PC-3 (cell line): ENCODE measurements at regions of chr9 and their contacts with region 1.

Region 1: DNA sequence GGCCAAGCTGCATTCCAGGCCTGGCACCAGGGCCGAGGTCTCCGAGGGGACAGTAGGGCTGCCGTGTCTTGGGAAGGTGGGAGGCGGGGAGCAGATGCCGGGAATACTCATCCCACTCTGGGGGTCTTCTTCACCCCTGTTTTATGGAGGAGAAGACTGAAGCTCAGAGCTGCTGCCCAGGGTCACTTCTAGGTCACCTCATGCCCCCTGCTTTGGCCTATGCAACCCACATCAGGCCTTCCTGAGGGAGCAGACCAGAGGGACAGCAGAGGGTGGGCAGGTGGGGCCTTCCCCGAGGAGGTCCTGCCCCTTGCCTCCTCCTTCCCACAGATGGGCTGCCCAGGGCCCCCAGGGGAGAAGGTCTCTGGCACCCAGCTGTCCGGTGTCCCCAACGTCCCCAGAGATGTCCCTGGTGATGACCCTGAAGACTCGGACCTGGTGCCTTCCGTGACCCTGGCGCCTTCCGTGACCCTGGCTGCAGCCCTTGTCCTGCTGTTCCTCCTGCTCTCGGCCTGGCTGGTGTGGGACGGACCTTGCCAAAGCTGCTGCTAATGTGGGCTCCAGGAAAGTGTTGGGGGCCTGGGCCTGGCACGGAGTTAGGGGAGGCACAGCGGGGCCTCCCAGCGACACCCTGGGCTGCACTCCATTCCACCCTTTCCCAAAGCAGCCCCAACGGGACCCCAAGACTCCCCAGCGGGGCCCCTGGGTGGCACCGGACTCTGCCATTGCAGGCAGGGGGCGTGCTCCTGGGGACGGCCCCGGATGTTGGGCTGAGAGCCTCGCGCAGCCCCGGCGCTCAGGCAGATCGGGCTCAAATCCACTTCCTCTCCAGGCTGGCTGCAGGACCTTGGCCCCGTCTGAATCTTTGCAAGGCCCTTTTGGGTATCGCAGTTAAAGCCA is 6.7 kb upstream of the SLC2A6 start:
- DNase-seq: no peak
- ATAC-seq: peak; percentile 14; the same call in 1 of the 2 replicates
- H3K4me3 ChIP-seq: no peak overlapping the region
- H3K27ac ChIP-seq: no peak overlapping the region
- H3K4me1 ChIP-seq: peaks cover 16% of the 10 kb centered on the region
- H3K27me3 ChIP-seq: no peaks in the 10 kb centered on the region
- CTCF ChIP-seq: no peak

Region 2: DNA sequence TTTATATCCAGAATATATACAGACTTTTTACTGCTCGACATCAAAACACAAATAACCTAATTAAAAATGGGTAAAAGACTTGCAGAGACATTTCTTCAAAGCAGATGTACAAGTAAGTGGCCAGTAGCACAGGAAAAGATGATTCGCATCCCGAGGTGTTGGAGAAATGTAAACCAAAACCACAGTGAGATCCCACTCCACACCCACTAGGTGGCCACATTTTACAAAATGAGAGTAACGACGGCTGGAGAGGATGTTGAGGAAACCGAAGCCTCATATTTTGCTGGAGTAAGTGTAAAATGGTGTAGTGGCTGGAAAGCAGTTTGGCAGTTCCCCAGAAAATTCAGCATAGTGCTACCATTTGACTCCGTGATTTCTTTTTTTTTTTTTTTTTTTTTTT is 300.6 kb before region 1 on chr9:
- CTCF ChIA-PET with region 1: interaction called, 6 read pairs
- POLR2A ChIA-PET with region 1: no interaction called
- intact Hi-C with region 1: loop called (anchors 5 kb)
- DNase-seq: peak; percentile 78
- ATAC-seq: peak; percentile 80
- H3K4me3 ChIP-seq: no peak overlapping the region
- H3K27ac ChIP-seq: no peak overlapping the region
- H3K4me1 ChIP-seq: 0 out of 2 replicates have a peak, but pooled peaks cover 4% of the 10 kb centered on the region
- H3K27me3 ChIP-seq: no peaks in the 10 kb centered on the region
- CTCF ChIP-seq: peak; percentile 61

Region 3: GRCh38 chr9:133356391-133357091 is 129.1 kb before region 1 on chr9 and contains the starts of genes SURF1 and SURF2:
- CTCF ChIA-PET with region 1: interaction called, 5 read pairs
- POLR2A ChIA-PET with region 1: no interaction called
- intact Hi-C with region 1: loop called (anchors 5 kb)
- DNase-seq: peak; percentile 74
- ATAC-seq: peak; percentile 76
- H3K4me3 ChIP-seq: peak within 1 kb of the TSS; percentile 89
- H3K27ac ChIP-seq: no peak within 1 kb of the TSS
- H3K4me1 ChIP-seq: peaks cover 11% of the 10 kb centered on the region
- H3K27me3 ChIP-seq: no peaks in the 10 kb centered on the region
- CTCF ChIP-seq: no peak
- total RNA-seq, gene SURF1: 15.7 and 28.1 TPM in 2 replicates
- total RNA-seq, gene SURF2: 103 and 134 TPM in 2 replicates

Region 4: DNA sequence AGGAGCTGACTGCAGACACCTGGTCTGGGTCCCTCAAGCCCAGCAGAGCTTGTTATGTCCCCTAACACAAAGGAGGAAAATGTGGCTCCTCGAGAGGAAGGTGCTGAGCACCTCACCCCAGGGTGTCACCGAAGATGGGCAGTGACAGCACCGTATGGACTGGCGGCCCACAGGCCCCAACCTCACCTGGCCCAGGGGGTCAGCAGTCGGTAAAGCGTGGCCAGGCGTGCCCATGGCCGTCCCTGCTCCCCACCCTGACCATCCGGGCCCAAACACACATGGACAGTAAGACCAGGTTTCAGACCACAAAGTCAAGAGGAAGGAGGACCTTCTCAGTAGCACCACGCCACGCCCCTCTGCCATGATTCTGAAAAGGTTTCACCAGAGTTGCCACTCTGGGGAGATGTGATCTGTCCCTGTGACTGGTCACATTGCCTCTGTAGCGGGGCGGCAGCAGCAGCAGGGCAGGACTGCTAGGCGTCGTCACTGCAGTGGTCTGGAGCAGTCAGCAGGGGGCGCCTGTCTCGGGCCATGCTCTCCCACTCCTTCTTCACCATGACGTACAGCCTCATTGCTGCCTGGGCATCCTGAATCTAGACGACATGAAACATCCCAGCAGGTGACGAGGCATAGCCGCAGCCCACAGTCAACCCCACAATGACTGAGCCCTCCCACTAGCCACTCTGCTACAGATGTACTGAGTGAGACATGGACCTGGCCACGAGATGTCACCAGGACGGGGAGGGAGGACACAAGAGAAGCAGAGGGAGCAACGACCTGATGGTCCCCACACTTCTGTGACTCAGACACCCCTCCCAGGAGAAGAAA is 78.9 kb before region 1 on chr9:
- CTCF ChIA-PET with region 1: no interaction called
- POLR2A ChIA-PET with region 1: no interaction called
- intact Hi-C with region 1: loop called (anchors 1 kb)
- DNase-seq: peak; percentile 48
- ATAC-seq: peak; percentile 82
- H3K4me3 ChIP-seq: no peak overlapping the region
- H3K27ac ChIP-seq: no peak overlapping the region
- H3K4me1 ChIP-seq: no peaks in the 10 kb centered on the region
- H3K27me3 ChIP-seq: no peaks in the 10 kb centered on the region
- CTCF ChIP-seq: peak; percentile 80

Region 5: DNA sequence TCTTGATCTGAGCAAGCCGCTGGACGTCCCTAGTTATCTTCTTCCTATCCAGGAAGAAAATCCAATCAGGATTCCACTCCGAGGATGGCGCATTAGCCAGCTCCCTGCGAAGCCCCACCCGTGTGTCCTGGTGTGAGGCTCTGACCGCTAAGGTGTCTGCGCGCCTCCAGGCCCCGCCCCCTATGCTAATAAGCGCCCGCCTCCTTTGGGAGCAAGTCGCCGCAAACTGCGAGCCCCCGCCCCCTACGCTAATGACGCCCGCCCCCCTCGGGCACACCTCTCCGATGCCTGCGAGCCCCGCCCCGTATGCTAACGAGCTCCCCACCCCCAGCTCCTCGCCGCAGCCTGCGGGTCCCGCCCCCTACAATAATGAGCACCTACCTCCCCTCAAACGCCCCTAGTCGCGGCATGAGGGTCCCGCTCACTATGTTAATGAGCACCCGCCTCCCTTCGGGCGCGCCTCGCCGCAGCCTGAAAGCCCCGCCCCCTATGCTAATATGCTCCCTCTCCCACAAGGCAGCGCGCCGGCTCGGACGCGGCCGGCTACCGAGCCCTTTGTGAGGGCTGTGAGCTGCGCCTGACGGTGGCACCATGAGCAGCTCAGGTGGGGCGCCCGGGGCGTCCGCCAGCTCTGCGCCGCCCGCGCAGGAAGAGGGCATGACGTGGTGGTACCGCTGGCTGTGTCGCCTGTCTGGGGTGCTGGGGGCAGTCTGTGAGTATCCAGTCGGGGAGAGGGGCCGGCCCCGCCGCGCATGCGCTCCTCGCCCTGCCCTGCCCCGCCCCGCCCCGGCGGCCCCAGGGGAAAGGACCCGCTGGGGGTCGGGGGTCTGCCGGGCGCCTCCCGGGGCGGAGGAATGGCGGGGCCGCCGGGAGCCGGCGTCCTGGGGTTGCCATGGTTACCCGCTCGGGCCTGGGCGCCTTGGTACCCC is 25.9 kb before region 1 on chr9 and contains the start of gene CACFD1:
- CTCF ChIA-PET with region 1: no interaction called
- POLR2A ChIA-PET with region 1: no interaction called
- intact Hi-C with region 1: no loop called
- DNase-seq: peak; percentile 86
- ATAC-seq: peak; percentile 87
- H3K4me3 ChIP-seq: peak within 1 kb of the TSS; percentile 85
- H3K27ac ChIP-seq: peak within 1 kb of the TSS; percentile 46
- H3K4me1 ChIP-seq: peaks cover 11% of the 10 kb centered on the region; the same call in 1 of the 2 replicates
- H3K27me3 ChIP-seq: no peaks in the 10 kb centered on the region
- CTCF ChIP-seq: no peak
- total RNA-seq, gene CACFD1: 7.5 and 10.0 TPM in 2 replicates